Activated naive CD4-positive, alpha-beta T cell treated with anti-CD3 and anti-CD28 coated beads for 36 hours (primary cell): ENCODE measurements at regions of chr6 and their contacts with region 1.

Region 1: GRCh38 chr6:138115877-138116660 is 8.8 kb upstream of the PERP start:
- DNase-seq: peak; percentile 60
- H3K4me3 Mint-ChIP-seq: no peak overlapping the region
- H3K27ac Mint-ChIP-seq: no peak overlapping the region
- H3K4me1 Mint-ChIP-seq: peaks cover 6% of the 10 kb centered on the region
- H3K27me3 Mint-ChIP-seq: peaks cover 12% of the 10 kb centered on the region

Region 2: DNA sequence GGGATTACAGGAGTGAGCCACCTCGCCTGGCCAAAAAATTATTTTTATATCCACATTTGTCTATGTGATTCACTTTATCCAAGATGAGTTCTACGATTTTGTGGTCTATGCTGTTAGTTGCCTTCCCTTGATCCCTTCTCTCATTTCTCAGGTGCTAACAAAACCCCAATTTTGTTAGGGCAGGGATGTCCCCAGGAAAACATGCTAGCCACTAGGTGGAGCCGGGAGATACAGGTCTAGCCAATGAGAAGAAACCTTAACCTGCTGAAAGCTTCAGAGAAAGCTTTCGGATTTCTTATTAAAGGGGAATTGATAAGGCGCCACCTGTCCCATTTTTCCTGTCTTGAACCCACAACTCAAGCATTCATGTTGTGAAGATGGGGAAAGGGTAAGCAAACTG is 454.5 kb before region 1 on chr6:
- CTCF ChIA-PET with region 1: no interaction called
- intact Hi-C with region 1: no loop called
- DNase-seq: peak; percentile 71
- H3K4me3 Mint-ChIP-seq: no peak overlapping the region
- H3K27ac Mint-ChIP-seq: no peak overlapping the region
- H3K4me1 Mint-ChIP-seq: peaks cover 19% of the 10 kb centered on the region
- H3K27me3 Mint-ChIP-seq: peaks cover 4% of the 10 kb centered on the region

Region 3: DNA sequence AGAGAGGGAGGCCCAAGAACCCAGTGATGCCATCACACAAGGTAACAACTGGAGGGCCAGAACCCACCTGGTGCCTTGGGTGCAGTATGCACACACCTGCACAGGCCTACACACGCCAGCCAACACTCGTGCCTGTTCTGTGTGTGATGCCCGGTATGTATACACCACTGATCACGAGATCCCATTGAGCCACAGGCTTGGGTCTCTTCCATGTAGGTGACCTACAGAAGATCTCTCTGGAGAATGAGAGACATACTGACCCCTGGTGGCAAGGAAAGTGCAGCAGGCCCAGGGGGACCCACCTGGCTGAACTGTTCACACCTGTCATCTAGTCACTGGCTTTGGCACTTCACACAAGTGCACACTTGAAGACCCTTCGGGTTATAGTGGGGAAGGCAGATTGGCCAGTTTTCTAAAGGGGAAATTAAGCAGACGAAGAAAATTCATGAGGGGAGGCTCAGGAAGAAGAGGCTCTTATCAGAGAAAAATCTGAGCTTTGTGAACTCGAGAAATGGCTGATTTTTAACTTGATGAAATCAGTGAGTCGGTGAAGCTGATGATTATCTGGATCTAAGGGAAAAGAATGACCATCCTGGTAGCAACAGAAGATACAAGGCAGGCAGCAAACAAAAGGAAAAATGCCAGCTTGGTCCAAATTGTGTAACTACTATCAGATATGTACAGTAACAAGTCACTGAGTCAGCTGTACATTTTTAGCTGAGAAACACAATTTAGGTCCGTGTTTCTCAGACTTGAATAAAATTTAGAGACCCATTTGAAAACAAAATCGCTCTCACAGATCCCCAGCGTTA is 171.3 kb after region 1 on chr6:
- CTCF ChIA-PET with region 1: interaction called, 47 read pairs
- intact Hi-C with region 1: loop called (anchors 1 kb)
- DNase-seq: peak; percentile 70
- H3K4me3 Mint-ChIP-seq: no peak overlapping the region
- H3K27ac Mint-ChIP-seq: no peak overlapping the region
- H3K4me1 Mint-ChIP-seq: peaks cover 6% of the 10 kb centered on the region
- H3K27me3 Mint-ChIP-seq: no peaks in the 10 kb centered on the region

Region 4: GRCh38 chr6:138428944-138429598 is 313.0 kb after region 1 on chr6:
- CTCF ChIA-PET with region 1: interaction called, 4 read pairs
- intact Hi-C with region 1: loop called (anchors 2 kb)
- DNase-seq: no peak
- H3K4me3 Mint-ChIP-seq: no peak overlapping the region
- H3K27ac Mint-ChIP-seq: no peak overlapping the region
- H3K4me1 Mint-ChIP-seq: no peaks in the 10 kb centered on the region
- H3K27me3 Mint-ChIP-seq: peaks cover 2% of the 10 kb centered on the region

Region 5: DNA sequence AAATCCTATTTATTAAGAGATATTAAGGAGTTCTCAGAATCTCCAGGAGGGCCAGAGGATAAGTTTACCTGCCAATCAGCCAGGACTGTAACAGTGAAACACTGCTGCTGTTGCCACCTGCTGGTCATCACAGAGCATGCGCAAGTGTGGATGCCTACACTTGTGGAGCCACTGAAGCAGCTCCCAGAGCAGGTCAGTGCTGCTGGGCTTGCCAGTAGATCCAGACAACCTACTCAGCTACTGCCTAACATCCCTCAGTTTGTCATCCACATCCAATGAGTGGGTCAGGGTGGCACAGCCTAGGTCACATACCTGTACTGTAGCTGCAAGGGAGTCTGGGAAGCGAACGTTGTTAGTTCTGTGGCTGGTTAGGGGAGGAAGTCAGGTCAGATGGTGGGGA is 401.6 kb after region 1 on chr6:
- CTCF ChIA-PET with region 1: interaction called, 38 read pairs
- intact Hi-C with region 1: loop called (anchors 1 kb)
- DNase-seq: peak; percentile 73
- H3K4me3 Mint-ChIP-seq: no peak overlapping the region
- H3K27ac Mint-ChIP-seq: no peak overlapping the region
- H3K4me1 Mint-ChIP-seq: peaks cover 2% of the 10 kb centered on the region
- H3K27me3 Mint-ChIP-seq: peaks cover 3% of the 10 kb centered on the region